Activated T-helper 1 cell treated with anti-CD3 and anti-CD28 coated beads, Interleukin-12 subunit alpha, Interleukin-12 subunit beta, Interleukin-2, Interleukin-4 antibody, amounts not matched to agents 30 ng/mL and 10 ng/mL and 1 ng/mL, durations not matched to agents 14 hours and 24 hours and 36 hours (primary cell): ENCODE measurements at regions of chr9 and their contacts with region 1.

Region 1: GRCh38 chr9:6584881-6585597 is 60.5 kb downstream of the GLDC start:
- DNase-seq: no peak
- H3K4me3 Mint-ChIP-seq: no peak overlapping the region
- H3K27ac Mint-ChIP-seq: no peak overlapping the region
- H3K4me1 Mint-ChIP-seq: no peaks in the 10 kb centered on the region
- H3K27me3 Mint-ChIP-seq: peaks cover 5% of the 10 kb centered on the region

Region 2: GRCh38 chr9:6667633-6668280 is 82.7 kb after region 1 on chr9:
- intact Hi-C with region 1: loop called (anchors 1 kb)
- DNase-seq: no peak
- H3K4me3 Mint-ChIP-seq: no peak overlapping the region
- H3K27ac Mint-ChIP-seq: no peak overlapping the region
- H3K4me1 Mint-ChIP-seq: no peaks in the 10 kb centered on the region
- H3K27me3 Mint-ChIP-seq: peaks cover 5% of the 10 kb centered on the region

Region 3: DNA sequence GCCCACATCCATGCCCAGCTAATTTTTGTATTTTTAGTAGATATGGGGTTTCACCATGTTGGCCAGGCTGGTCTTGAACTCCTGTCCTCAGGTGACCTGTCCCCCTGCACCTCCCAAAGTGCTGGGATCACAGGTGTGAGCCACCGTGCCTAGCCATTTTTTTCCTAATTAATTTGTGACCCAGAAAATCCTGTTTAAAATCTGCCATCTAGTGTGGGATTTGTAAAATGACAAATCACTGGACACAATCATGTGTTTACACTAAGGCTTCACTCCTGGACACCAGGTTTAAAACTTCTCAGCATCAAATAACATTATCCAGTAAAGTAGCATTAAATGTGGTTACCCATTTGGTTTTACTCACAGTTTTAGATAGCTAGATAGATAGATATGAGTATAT is 154.2 kb after region 1 on chr9:
- intact Hi-C with region 1: loop called (anchors 5 kb)
- DNase-seq: no peak
- H3K4me3 Mint-ChIP-seq: no peak overlapping the region
- H3K27ac Mint-ChIP-seq: no peak overlapping the region
- H3K4me1 Mint-ChIP-seq: no peaks in the 10 kb centered on the region
- H3K27me3 Mint-ChIP-seq: no peaks in the 10 kb centered on the region